Activated naive CD4-positive, alpha-beta T cell treated with anti-CD3 and anti-CD28 coated beads for 36 hours (primary cell): ENCODE measurements at regions of chr1 and their contacts with region 1.

Region 1: DNA sequence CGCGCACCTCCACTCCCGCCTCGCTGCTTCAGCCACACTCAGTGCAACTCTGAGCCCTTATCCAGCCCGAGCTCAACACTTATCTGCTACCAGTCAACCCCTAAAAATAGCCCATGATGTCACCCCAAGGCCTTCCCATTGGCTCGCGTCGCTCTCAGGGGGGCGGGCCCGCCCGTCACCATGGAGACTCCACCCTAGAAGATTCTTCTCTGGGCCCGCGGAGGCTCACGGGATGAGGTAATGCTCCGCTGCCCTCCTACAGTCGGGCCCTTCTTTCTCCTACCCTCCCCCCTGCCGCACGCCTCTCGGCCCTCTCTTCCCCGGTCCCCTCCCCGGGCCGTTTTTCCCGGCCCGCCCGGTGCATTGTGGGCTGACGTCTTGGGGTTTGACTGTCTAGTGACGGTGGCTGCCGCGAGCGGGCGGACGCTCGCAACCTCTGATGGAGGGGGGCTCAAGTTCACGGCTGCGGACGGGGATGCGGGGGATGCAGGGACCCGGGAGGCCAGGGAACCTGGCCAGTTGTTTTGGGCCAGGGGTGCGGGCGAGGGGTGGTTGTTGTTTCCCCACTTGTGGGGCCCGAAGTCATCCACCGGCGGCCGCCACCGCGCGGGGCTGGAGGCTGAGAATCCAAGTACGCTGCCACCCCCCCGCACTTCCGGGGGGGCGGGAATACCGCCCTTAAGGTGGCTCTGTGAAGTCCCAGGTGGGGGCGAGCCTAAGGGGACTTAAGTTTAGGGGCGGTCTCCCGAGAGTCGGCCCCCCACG is at the start of gene JUN:
- DNase-seq: peak; percentile 99
- H3K4me3 Mint-ChIP-seq: peak within 1 kb of the TSS; percentile 97
- H3K27ac Mint-ChIP-seq: peak within 1 kb of the TSS; percentile 99
- H3K4me1 Mint-ChIP-seq: peaks cover 16% of the 10 kb centered on the region
- H3K27me3 Mint-ChIP-seq: no peaks in the 10 kb centered on the region
- total RNA-seq, gene JUN: 24.2 to 25.9 TPM

Region 2: DNA sequence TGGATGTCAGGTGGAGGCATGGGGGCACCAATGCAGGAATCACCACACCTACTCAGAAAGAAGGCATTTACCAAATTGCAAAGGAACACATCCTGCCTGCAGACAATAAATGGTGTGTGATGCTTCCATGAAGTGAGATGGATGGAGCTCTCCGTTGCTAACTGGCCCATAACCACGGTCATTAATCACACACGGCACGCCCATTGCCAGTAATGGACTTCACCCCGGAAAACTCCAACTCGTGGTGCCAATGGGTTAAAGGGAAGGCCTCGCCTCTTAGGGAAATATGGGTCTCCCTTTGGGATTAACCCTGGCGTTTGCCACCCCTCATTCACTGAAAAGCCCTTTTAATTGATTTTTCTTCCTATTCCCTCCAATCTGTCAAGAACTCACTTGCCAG is 917.2 kb before region 1 on chr1:
- CTCF ChIA-PET with region 1: no interaction called
- intact Hi-C with region 1: no loop called
- DNase-seq: no peak
- H3K4me3 Mint-ChIP-seq: no peak overlapping the region
- H3K27ac Mint-ChIP-seq: no peak overlapping the region
- H3K4me1 Mint-ChIP-seq: no peaks in the 10 kb centered on the region
- H3K27me3 Mint-ChIP-seq: peaks cover 3% of the 10 kb centered on the region

Region 3: DNA sequence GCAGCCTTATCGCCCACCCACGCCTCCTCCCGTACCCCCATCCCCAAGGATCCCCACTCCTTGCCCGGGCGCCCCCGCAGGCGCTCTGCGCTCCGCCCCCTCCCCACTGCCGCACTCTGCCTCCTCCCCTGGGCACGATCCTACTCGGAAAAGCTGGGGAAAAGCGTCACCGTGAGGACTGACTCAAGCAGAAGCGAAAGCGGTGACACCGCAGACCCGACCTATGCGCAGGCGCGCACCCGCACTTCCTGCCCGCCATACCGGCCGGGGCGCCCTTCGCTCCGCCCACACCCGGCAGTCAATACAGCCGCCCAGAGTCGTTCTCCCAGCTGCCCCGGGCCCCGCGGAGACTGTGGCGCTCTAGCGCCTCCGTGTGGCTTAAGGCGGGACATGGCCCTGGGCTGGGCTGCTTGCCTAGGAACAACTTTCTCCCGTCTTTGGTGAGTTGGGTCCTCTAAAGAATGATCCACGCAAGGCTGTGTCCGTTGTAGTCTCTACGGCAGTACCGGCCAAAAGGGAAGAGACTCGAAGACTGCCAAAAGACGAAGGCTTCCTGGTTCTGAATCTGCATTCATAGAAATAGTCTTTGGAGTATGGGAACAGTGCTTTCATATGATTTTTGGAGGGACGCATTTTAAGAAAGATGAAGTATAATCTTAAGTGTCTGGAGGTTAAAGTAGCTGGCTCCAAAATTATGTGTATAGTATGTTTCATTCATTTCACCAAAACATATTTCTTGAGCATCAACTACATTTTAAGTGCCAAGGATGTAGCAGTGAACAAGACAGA is 237.5 kb before region 1 on chr1 and contains the start of gene OMA1:
- CTCF ChIA-PET with region 1: no interaction called
- intact Hi-C with region 1: loop called (anchors 1 kb)
- DNase-seq: peak; percentile 98
- H3K4me3 Mint-ChIP-seq: peak within 1 kb of the TSS; percentile 91
- H3K27ac Mint-ChIP-seq: peak within 1 kb of the TSS; percentile 97
- H3K4me1 Mint-ChIP-seq: peaks cover 13% of the 10 kb centered on the region
- H3K27me3 Mint-ChIP-seq: no peaks in the 10 kb centered on the region
- total RNA-seq, gene OMA1: 15.4 to 16.6 TPM

Region 4: GRCh38 chr1:58755468-58755872 is 28.7 kb before region 1 on chr1:
- CTCF ChIA-PET with region 1: interaction called, 3 read pairs
- intact Hi-C with region 1: loop called (anchors 1 kb)
- DNase-seq: peak; percentile 86
- H3K4me3 Mint-ChIP-seq: no peak overlapping the region
- H3K27ac Mint-ChIP-seq: peak overlapping the region; percentile 71
- H3K4me1 Mint-ChIP-seq: peaks cover 41% of the 10 kb centered on the region
- H3K27me3 Mint-ChIP-seq: no peaks in the 10 kb centered on the region

Region 5: GRCh38 chr1:58885998-58886397 is 101.8 kb after region 1 on chr1:
- CTCF ChIA-PET with region 1: no interaction called
- intact Hi-C with region 1: loop called (anchors 1 kb)
- DNase-seq: peak; percentile 64
- H3K4me3 Mint-ChIP-seq: no peak overlapping the region
- H3K27ac Mint-ChIP-seq: peak overlapping the region; percentile 25
- H3K4me1 Mint-ChIP-seq: peaks cover 43% of the 10 kb centered on the region
- H3K27me3 Mint-ChIP-seq: no peaks in the 10 kb centered on the region

Region 6: GRCh38 chr1:59020151-59020997 is 236.2 kb after region 1 on chr1:
- CTCF ChIA-PET with region 1: no interaction called
- intact Hi-C with region 1: loop called (anchors 2 kb)
- DNase-seq: peak; percentile 67
- H3K4me3 Mint-ChIP-seq: peak overlapping the region; percentile 47
- H3K27ac Mint-ChIP-seq: peak overlapping the region; percentile 75
- H3K4me1 Mint-ChIP-seq: peaks cover 22% of the 10 kb centered on the region
- H3K27me3 Mint-ChIP-seq: no peaks in the 10 kb centered on the region

Region 7: DNA sequence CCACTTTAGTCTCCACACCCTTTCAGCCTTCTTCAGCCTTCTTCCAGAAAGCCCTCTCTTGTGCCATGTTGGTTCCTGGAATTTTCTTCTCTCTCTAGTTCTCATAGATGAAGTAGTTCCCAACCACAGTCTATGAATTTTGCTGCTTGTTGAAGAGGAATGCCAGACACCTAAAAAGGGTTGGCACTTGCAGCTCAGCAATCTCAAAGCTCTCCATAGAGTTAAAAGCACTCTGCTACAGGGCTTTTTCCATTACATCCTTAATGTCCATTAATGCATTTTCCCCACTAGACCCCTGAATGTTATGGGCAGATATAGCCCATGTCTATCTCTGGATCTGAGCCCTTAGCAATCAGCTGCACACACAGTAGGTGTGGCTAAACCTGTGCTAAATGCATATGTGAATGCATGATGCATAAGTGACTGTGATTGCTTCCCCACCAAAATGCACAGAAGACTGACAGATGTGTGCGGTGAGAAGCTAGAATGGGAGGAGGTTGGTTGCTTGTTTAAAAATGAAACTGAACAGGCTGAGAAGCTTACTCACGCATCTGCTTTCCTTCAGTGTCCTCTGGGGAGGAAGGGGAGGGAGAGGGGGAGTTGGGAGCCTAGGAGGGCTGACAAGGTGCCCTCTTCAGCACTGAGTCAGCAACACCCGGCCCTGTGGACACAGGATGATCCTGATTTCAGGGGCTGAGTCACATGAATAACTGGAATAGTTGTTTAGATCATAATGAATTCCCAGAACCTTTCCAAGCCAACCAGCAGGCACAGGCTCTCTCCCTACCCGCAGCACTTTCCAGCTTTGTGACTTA is 366.6 kb after region 1 on chr1:
- CTCF ChIA-PET with region 1: no interaction called
- intact Hi-C with region 1: loop called (anchors 5 kb)
- DNase-seq: peak; percentile 42
- H3K4me3 Mint-ChIP-seq: no peak overlapping the region
- H3K27ac Mint-ChIP-seq: no peak overlapping the region
- H3K4me1 Mint-ChIP-seq: peaks cover 13% of the 10 kb centered on the region
- H3K27me3 Mint-ChIP-seq: no peaks in the 10 kb centered on the region

Region 8: DNA sequence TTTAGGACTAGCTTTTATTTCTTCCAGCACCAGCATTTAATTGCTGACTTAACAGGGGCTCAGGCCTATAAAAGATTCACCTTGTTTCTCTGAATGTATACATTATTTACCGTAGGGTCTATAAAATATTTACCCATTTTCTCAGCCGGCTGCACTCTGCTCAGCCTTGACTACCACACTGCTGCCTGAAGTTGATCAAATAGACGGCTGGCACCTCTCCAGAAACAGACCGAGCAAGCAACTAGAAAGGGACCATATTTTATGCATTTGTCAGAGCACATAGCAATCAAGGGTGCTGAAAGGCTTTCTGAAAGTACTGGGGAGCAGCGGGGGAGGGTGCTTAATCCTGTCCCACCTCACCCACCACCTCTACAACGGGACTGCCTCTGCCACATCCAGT is 448.0 kb after region 1 on chr1:
- CTCF ChIA-PET with region 1: no interaction called
- intact Hi-C with region 1: no loop called
- DNase-seq: no peak
- H3K4me3 Mint-ChIP-seq: no peak overlapping the region
- H3K27ac Mint-ChIP-seq: no peak overlapping the region
- H3K4me1 Mint-ChIP-seq: no peaks in the 10 kb centered on the region
- H3K27me3 Mint-ChIP-seq: no peaks in the 10 kb centered on the region

Region 9: GRCh38 chr1:59699227-59699847 is 915.2 kb after region 1 on chr1:
- CTCF ChIA-PET with region 1: interaction called, 6 read pairs
- intact Hi-C with region 1: loop called (anchors 1 kb)
- DNase-seq: peak; percentile 19
- H3K4me3 Mint-ChIP-seq: no peak overlapping the region
- H3K27ac Mint-ChIP-seq: no peak overlapping the region
- H3K4me1 Mint-ChIP-seq: peaks cover 15% of the 10 kb centered on the region
- H3K27me3 Mint-ChIP-seq: no peaks in the 10 kb centered on the region